Calu3 (cell line): ENCODE measurements at regions of chr19 and their contacts with region 1.

Region 1: GRCh38 chr19:38374429-38375176 is at the start of gene PSMD8:
- DNase-seq: peak; percentile 99
- H3K4me3 Mint-ChIP-seq: peak within 1 kb of the TSS; percentile 97
- H3K27ac Mint-ChIP-seq: peak within 1 kb of the TSS; percentile 97
- H3K4me1 Mint-ChIP-seq: peaks cover 22% of the 10 kb centered on the region
- H3K27me3 Mint-ChIP-seq: peaks cover 26% of the 10 kb centered on the region
- CTCF ChIP-seq: peak; percentile 16
- total RNA-seq, gene PSMD8: 226 and 233 TPM in 2 replicates

Region 2: GRCh38 chr19:38361633-38362075 is 12.9 kb before region 1 on chr19:
- CTCF ChIA-PET with region 1: interaction called, 12 read pairs
- intact Hi-C with region 1: no loop called
- DNase-seq: peak; percentile 88
- H3K4me3 Mint-ChIP-seq: peak overlapping the region; percentile 76
- H3K27ac Mint-ChIP-seq: peak overlapping the region; percentile 29
- H3K4me1 Mint-ChIP-seq: peaks cover 11% of the 10 kb centered on the region
- H3K27me3 Mint-ChIP-seq: peaks cover 63% of the 10 kb centered on the region
- CTCF ChIP-seq: peak; percentile 27

Region 3: DNA sequence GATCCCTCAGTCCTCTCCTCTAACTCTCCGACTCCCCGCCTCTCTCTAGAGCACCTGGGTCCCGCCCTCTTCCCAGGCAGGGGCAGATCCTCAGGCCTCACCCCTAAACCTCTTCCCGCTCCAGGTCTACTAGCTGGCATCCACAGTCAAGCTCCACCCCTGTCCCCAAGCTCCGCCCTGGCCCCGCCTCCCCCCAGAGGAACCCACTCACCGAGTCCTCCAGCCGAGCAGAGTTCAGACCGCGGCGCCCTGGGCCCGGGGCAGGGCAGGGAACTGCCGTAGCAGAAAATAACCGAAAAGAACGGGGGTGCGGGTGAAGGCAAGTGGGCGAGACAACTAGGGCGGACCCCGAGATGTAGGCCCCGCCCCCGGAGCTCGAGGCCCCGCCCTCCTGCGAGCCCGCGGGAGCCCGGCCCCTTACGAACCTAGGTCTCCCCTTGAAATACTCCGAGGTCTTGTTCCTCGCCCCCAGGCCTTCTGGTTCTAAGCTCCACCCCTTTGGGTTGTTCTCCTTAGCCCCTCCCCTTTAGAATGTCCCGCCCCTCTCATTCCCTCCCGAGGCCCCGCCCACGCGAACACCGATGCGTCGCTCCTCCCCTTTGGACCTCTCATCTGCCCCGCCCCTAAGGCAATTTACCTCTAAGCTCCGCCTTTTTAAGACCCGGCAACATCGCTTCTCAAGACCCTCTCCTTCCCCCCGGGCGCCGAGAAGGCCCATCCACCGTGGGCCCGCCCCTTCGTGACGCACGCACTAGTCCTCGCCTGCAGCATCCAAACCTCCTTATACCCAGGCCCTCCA is 13.1 kb after region 1 on chr19 and contains the start of gene GGN:
- CTCF ChIA-PET with region 1: interaction called, 13 read pairs
- intact Hi-C with region 1: no loop called
- DNase-seq: peak; percentile 92
- H3K4me3 Mint-ChIP-seq: peak within 1 kb of the TSS; percentile 75
- H3K27ac Mint-ChIP-seq: peak within 1 kb of the TSS; percentile 75
- H3K4me1 Mint-ChIP-seq: peaks cover 19% of the 10 kb centered on the region
- H3K27me3 Mint-ChIP-seq: peaks cover 16% of the 10 kb centered on the region
- CTCF ChIP-seq: no peak
- total RNA-seq, gene GGN: 0.40 and 0.64 TPM in 2 replicates